IMR-90 (cell line): ENCODE measurements at regions of chr10 and their contacts with region 1.

Region 1: GRCh38 chr10:89701238-89702120 is at the start of gene KIF20B:
- DNase-seq: peak; percentile 95
- ATAC-seq: peak; percentile 100
- H3K4me3 ChIP-seq: peak within 1 kb of the TSS; percentile 77
- H3K27ac ChIP-seq: peak within 1 kb of the TSS; percentile 90
- H3K4me1 ChIP-seq: peaks cover 2% of the 10 kb centered on the region; the same call in 1 of the 2 replicates
- H3K27me3 ChIP-seq: no peaks in the 10 kb centered on the region
- CTCF ChIP-seq: peak; percentile 54
- POLR2A ChIP-seq: peak; percentile 60; the same call in 1 of the 2 replicates
- RAD21 ChIP-seq: peak; percentile 56
- total RNA-seq, gene KIF20B: 16.1 and 23.5 TPM in 2 replicates

Region 2: DNA sequence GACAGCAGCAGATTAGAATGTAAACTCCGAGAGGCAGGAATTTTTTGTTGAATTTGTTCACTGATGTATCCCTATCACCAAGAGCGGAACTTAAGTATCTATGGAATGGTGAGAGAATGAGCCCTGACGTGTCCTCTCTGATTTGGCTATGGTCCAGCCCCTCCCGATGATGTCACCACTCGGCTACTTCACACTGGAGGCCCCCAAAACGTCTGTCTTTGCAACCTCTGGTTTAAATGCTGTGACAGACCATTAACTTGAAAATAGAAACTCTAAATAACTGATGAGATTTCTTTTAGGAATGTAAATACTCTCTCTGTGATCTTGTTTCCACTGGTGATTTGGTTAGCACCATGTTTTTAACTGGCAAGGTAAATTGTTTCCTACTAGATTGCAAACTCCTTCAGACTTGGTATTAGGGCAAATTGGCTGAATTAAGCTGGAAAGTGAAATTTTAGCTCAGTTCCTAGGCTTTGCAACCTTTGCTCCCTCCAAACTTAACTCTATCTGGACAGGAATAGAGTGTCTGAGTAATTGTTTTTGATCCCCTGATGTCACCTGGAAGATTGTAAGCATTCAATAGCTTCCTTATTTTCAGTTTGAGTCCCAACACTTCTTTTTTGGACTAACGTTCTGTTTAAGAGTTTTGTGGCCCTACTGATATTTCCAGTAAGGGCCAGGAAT is 185.2 kb before region 1 on chr10:
- CTCF ChIA-PET with region 1: no interaction called
- POLR2A ChIA-PET with region 1: no interaction called
- dilution Hi-C with region 1: no loop called
- in situ Hi-C with region 1: no loop called
- intact Hi-C with region 1: loop called (anchors 5 kb)
- DNase-seq: peak; percentile 98
- ATAC-seq: peak; percentile 61
- H3K4me3 ChIP-seq: no peak overlapping the region
- H3K27ac ChIP-seq: no peak overlapping the region
- H3K4me1 ChIP-seq: peaks cover 24% of the 10 kb centered on the region
- H3K27me3 ChIP-seq: no peaks in the 10 kb centered on the region
- CTCF ChIP-seq: no peak
- POLR2A ChIP-seq: no peak
- RAD21 ChIP-seq: no peak

Region 3: GRCh38 chr10:89563861-89564478 is 137.5 kb before region 1 on chr10:
- CTCF ChIA-PET with region 1: no interaction called
- POLR2A ChIA-PET with region 1: no interaction called
- dilution Hi-C with region 1: no loop called
- in situ Hi-C with region 1: no loop called
- intact Hi-C with region 1: loop called (anchors 2 kb)
- DNase-seq: peak; percentile 60
- ATAC-seq: peak; percentile 75
- H3K4me3 ChIP-seq: no peak overlapping the region
- H3K27ac ChIP-seq: no peak overlapping the region
- H3K4me1 ChIP-seq: no peaks in the 10 kb centered on the region; the same call in 1 of the 2 replicates
- H3K27me3 ChIP-seq: no peaks in the 10 kb centered on the region
- CTCF ChIP-seq: peak; percentile 85
- POLR2A ChIP-seq: no peak; the same call in 1 of the 2 replicates
- RAD21 ChIP-seq: peak; percentile 95

Region 4: GRCh38 chr10:89643431-89644331 is 57.8 kb before region 1 on chr10:
- CTCF ChIA-PET with region 1: no interaction called
- POLR2A ChIA-PET with region 1: interaction called, 3 read pairs
- dilution Hi-C with region 1: no loop called
- in situ Hi-C with region 1: no loop called
- intact Hi-C with region 1: loop called (anchors 2 kb)
- DNase-seq: peak; percentile 96
- ATAC-seq: peak; percentile 89
- H3K4me3 ChIP-seq: peak overlapping the region; percentile 58
- H3K27ac ChIP-seq: peak overlapping the region; percentile 69
- H3K4me1 ChIP-seq: peaks cover 2% of the 10 kb centered on the region; the same call in 1 of the 2 replicates
- H3K27me3 ChIP-seq: no peaks in the 10 kb centered on the region
- CTCF ChIP-seq: no peak
- POLR2A ChIP-seq: peak; percentile 87
- RAD21 ChIP-seq: no peak

Region 5: GRCh38 chr10:89659143-89660131 is 42.0 kb before region 1 on chr10:
- CTCF ChIA-PET with region 1: no interaction called
- POLR2A ChIA-PET with region 1: no interaction called
- dilution Hi-C with region 1: no loop called
- in situ Hi-C with region 1: no loop called
- intact Hi-C with region 1: loop called (anchors 5 kb)
- DNase-seq: peak; percentile 89
- ATAC-seq: peak; percentile 94
- H3K4me3 ChIP-seq: no peak overlapping the region
- H3K27ac ChIP-seq: no peak overlapping the region
- H3K4me1 ChIP-seq: peaks cover 8% of the 10 kb centered on the region
- H3K27me3 ChIP-seq: no peaks in the 10 kb centered on the region
- CTCF ChIP-seq: no peak
- POLR2A ChIP-seq: no peak
- RAD21 ChIP-seq: no peak